ENCODE measurements at regions of chr10 and their contacts with region 1.

Region 1: DNA sequence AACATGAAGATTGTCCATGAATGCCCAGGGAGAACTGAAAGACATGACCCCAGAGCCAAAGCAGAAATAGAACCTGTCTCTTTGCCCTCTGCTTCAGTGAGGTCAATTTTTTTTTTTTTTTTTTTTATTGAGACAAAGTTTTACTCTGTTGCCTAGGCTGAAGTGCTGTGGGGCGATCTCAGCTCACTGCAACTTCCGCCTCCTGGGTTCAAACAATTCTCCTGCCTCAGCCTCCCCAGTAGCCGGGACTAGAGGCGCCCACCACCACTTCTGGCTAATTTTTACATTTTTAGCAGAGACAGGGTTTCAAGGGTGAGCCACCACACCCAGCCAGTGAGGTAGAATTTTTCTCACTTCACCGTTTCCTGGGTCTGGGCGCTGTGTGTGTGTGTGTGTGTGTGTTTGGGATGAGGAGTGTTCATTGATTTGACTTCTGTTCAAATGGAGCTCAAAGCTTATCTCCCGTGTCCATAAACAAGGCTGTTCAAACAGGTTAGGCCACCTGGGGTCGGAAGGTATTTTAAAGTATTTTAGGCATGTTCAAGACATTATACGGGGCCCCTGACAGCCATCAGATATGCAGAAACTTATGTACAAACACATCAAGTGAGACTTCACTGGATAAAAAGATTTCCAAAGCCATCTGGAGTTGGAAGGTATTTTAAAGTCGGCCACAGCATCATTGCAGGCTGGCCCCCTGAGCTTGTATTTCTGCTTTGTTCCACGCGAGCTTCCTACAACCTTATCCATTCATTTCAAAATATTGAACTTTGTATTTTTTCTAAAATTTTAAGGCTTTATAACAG is 93.8 kb downstream of the MAP3K8 start:
- DNase-seq: peak; percentile 90 to 92
- H3K4me3 ChIP-seq: no peak overlapping the region
- H3K4me3 Mint-ChIP-seq: peak overlapping the region; percentile 47
- H3K27ac Mint-ChIP-seq: peak overlapping the region; percentile 90
- H3K4me1 ChIP-seq: peaks cover 36% of the 10 kb centered on the region
- H3K4me1 Mint-ChIP-seq: peaks cover 36% of the 10 kb centered on the region
- H3K27me3 ChIP-seq: no peaks in the 10 kb centered on the region
- H3K27me3 Mint-ChIP-seq: no peaks in the 10 kb centered on the region
- CTCF ChIP-seq: no peak

Region 2: DNA sequence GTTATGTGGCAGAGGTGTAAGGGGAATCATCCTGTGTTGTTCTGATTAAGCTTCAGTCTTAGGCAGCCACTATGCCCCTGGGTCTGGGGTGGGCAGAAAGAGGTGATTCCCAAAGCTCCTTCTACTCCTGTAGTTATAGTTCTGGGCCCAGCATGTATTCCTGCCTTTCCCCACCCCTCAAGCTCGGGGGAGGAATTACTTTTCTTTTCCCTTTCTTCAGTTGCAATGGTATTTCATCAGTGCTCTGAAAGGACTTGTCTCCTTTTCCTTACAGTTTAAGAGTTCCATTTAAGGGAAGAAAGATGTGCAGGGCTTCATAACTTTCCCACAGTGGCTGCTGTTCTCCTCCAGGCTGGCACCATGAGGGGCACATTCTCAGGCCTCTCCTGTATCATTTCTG is 272.9 kb before region 1 on chr10:
- CTCF ChIA-PET with region 1: no interaction called
- POLR2A ChIA-PET with region 1: no interaction called
- intact Hi-C with region 1: no loop called
- DNase-seq: no peak
- H3K4me3 ChIP-seq: no peak overlapping the region
- H3K4me3 Mint-ChIP-seq: no peak overlapping the region
- H3K27ac Mint-ChIP-seq: no peak overlapping the region
- H3K4me1 ChIP-seq: no peaks in the 10 kb centered on the region
- H3K4me1 Mint-ChIP-seq: no peaks in the 10 kb centered on the region
- H3K27me3 ChIP-seq: no peaks in the 10 kb centered on the region
- H3K27me3 Mint-ChIP-seq: no peaks in the 10 kb centered on the region
- CTCF ChIP-seq: no peak

Region 3: DNA sequence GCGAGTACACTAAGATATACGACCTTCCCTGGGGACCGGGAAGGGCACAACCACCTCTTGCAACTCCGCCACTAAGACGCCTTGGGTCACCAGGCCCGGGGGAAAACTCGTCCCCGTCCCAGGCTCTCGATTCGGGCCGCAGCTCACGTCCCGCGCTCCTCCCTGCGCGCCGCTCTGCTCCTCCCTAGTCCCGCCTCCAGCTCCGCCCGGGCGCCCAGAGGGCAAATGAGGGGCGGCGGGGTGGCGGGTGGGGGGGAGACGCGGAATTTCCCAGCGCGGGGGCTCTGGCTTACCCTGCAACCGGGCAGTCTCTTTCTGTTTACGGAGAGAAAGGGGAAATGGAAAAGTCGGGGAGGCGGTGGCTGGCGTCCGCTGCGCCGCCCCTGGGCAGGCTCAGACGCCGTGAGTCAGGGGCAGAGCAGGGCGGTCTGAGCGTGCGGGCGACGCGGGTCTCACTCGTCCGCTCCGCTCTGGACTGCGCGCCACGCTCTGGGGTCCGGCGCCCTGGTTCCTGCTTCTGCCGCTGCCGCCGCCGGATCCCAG is 94.0 kb before region 1 on chr10 and contains the start of gene MAP3K8:
- CTCF ChIA-PET with region 1: interaction called, 8 read pairs
- POLR2A ChIA-PET with region 1: interaction called, 13 read pairs
- intact Hi-C with region 1: no loop called
- DNase-seq: peak; percentile 95 to 96
- H3K4me3 ChIP-seq: peak within 1 kb of the TSS; percentile 91
- H3K4me3 Mint-ChIP-seq: peak within 1 kb of the TSS; percentile 92
- H3K27ac Mint-ChIP-seq: peak within 1 kb of the TSS; percentile 97
- H3K4me1 ChIP-seq: peaks cover 47% of the 10 kb centered on the region
- H3K4me1 Mint-ChIP-seq: peaks cover 56% of the 10 kb centered on the region
- H3K27me3 ChIP-seq: no peaks in the 10 kb centered on the region
- H3K27me3 Mint-ChIP-seq: no peaks in the 10 kb centered on the region
- CTCF ChIP-seq: peak in 1 of 2 experiments; percentile 1
- total RNA-seq, gene MAP3K8: 17.9 and 18.8 TPM in 2 replicates

Region 4: GRCh38 chr10:30591249-30591670 is 63.4 kb after region 1 on chr10:
- CTCF ChIA-PET with region 1: interaction called, 13 read pairs
- POLR2A ChIA-PET with region 1: no interaction called
- intact Hi-C with region 1: no loop called
- DNase-seq: peak in 1 of 2 experiments; percentile 61
- H3K4me3 ChIP-seq: no peak overlapping the region
- H3K4me3 Mint-ChIP-seq: no peak overlapping the region
- H3K27ac Mint-ChIP-seq: no peak overlapping the region
- H3K4me1 ChIP-seq: no peaks in the 10 kb centered on the region
- H3K4me1 Mint-ChIP-seq: peaks cover 6% of the 10 kb centered on the region
- H3K27me3 ChIP-seq: no peaks in the 10 kb centered on the region
- H3K27me3 Mint-ChIP-seq: peaks cover 6% of the 10 kb centered on the region
- CTCF ChIP-seq: peak; percentile 81 to 84

Region 5: GRCh38 chr10:30639946-30640786 is 112.3 kb after region 1 on chr10:
- CTCF ChIA-PET with region 1: no interaction called
- POLR2A ChIA-PET with region 1: no interaction called
- intact Hi-C with region 1: no loop called
- DNase-seq: peak in 1 of 2 experiments; percentile 41
- H3K4me3 ChIP-seq: no peak overlapping the region
- H3K4me3 Mint-ChIP-seq: no peak overlapping the region
- H3K27ac Mint-ChIP-seq: no peak overlapping the region
- H3K4me1 ChIP-seq: no peaks in the 10 kb centered on the region
- H3K4me1 Mint-ChIP-seq: no peaks in the 10 kb centered on the region
- H3K27me3 ChIP-seq: no peaks in the 10 kb centered on the region; the same call in 1 of the 2 replicates
- H3K27me3 Mint-ChIP-seq: peaks cover 21% of the 10 kb centered on the region
- CTCF ChIP-seq: peak; percentile 91 to 97

Region 6: DNA sequence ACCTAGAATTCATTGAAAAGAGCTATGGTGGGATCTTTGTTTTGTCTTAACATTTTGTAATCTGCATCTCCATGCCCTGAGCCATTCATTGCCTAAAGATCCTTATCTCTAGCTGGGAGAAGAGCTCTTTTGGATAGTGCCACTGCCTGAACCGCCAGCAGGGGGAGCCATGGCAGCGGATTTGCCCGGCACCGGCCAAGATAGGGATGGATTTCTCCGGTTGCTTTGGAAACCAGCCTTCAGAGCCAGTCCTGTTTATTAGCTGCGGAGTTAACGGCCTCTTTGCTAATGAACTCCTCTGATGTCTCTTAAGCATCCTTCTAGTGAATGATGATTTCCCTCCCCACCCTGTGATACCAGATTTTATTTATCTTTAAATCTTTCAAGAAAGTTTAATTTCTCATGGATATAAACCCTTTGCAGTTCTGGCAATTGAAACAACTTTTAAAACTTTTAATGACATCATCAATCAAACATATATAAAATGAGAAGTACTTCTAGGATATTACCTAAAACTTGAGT is 159.9 kb after region 1 on chr10:
- CTCF ChIA-PET with region 1: interaction called, 12 read pairs
- POLR2A ChIA-PET with region 1: no interaction called
- intact Hi-C with region 1: no loop called
- DNase-seq: peak; percentile 82 to 92
- H3K4me3 ChIP-seq: no peak overlapping the region
- H3K4me3 Mint-ChIP-seq: no peak overlapping the region
- H3K27ac Mint-ChIP-seq: no peak overlapping the region
- H3K4me1 ChIP-seq: no peaks in the 10 kb centered on the region; the same call in 1 of the 2 replicates
- H3K4me1 Mint-ChIP-seq: no peaks in the 10 kb centered on the region
- H3K27me3 ChIP-seq: no peaks in the 10 kb centered on the region; the same call in 1 of the 2 replicates
- H3K27me3 Mint-ChIP-seq: peaks cover 28% of the 10 kb centered on the region
- CTCF ChIP-seq: peak; percentile 90 to 98

Region 7: DNA sequence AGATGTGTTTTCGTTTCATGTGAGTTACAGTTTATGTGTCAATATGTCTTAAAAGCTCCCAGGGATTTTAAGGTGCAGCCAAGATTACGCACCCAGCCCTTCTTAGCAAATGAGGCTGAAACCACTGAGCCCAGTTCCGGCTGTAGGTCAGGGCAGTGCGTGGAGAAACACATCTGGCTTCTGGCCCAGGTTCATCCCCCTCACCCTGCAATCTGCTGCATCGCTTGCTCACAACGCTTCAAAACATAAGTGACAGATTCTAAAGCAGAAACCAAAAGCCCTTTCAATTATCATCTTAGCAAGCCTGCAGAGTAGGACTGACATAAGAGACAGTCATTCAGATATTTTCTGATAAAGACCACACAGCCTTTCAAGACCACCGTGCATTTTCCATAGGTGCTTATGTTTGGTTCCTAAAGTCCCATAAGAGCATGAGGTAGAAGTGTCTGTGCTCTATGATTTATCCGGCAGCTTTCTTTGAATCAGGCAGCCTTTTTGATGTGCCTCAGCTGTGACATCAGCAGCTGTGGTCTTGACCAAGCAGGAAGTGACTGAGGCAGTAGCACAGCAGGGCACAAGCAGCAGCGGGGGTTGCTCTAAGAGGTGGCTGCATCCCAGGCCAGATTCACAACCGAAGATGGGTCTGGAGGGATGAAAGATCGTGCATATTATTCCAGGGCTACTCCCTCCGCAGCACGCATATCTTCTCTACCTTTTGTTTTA is 173.8 kb after region 1 on chr10:
- CTCF ChIA-PET with region 1: no interaction called
- POLR2A ChIA-PET with region 1: no interaction called
- intact Hi-C with region 1: no loop called
- DNase-seq: peak in 1 of 2 experiments; percentile 20
- H3K4me3 ChIP-seq: no peak overlapping the region
- H3K4me3 Mint-ChIP-seq: no peak overlapping the region
- H3K27ac Mint-ChIP-seq: no peak overlapping the region
- H3K4me1 ChIP-seq: no peaks in the 10 kb centered on the region
- H3K4me1 Mint-ChIP-seq: peaks cover 5% of the 10 kb centered on the region
- H3K27me3 ChIP-seq: no peaks in the 10 kb centered on the region; the same call in 1 of the 2 replicates
- H3K27me3 Mint-ChIP-seq: peaks cover 28% of the 10 kb centered on the region
- CTCF ChIP-seq: no peak

Region 8: GRCh38 chr10:30812018-30812851 is 284.4 kb after region 1 on chr10:
- CTCF ChIA-PET with region 1: no interaction called
- POLR2A ChIA-PET with region 1: no interaction called
- intact Hi-C with region 1: no loop called
- DNase-seq: no peak
- H3K4me3 ChIP-seq: no peak overlapping the region
- H3K4me3 Mint-ChIP-seq: no peak overlapping the region
- H3K27ac Mint-ChIP-seq: no peak overlapping the region
- H3K4me1 ChIP-seq: no peaks in the 10 kb centered on the region
- H3K4me1 Mint-ChIP-seq: no peaks in the 10 kb centered on the region
- H3K27me3 ChIP-seq: no peaks in the 10 kb centered on the region
- H3K27me3 Mint-ChIP-seq: peaks cover 3% of the 10 kb centered on the region
- CTCF ChIP-seq: no peak

Measured in Caco-2 (cell line).